ENCODE measurements at regions of chr11 and their contacts with region 1.

Region 1: DNA sequence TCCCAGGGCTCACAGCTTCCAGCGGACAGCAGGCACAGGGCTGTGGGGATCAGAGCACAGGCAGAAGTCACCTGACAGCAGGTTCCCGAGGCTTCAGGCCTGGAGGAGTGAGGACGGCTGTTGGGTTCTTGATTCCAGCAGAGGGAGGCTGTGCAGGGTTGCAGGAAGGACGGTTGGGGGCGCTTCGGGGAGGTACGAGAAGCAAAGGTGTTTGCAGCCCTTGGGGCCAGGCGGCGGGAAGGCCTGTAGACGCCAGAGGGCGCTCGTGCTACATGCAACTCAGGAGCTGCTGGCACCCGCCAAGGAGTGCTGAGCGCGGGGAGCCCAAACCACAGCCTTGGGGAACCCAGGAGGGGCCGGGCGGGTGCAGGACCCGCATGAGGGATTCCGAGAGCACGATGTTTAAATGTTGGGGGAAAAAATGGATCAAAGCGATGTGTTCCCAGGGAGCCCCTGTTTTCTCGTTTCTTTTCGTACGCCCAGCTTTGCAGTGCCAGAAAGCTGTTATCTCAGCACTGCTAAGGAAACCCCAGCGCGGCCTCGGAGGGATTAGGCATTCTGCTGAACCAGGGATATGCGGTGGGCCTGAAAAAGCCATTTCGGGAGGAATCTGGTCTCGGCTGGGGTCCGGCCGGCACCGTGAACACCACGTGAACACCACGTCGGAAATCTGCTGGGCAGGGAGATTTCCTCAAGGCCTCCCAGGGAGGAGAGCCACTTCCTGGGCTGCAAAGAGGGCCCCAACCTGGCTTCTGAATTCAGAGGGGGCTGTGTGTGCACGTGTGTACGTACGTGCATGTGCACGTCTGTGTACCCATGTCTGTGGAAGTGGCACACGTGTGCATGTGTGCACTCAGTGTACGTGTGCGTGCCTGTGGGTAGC is 88.1 kb downstream of the KCNQ1 start:
- DNase-seq: peak; percentile 95
- H3K4me3 ChIP-seq: peak overlapping the region in 3 of 4 donors; percentile 13 to 38 (median 32)
- H3K27ac ChIP-seq: peak overlapping the region in 2 of 4 donors; percentile 2 to 64
- H3K4me1 ChIP-seq: peaks cover 0 to 21% (median 17%) of the 10 kb centered on the region in 4 donors
- H3K27me3 ChIP-seq: peaks cover 0 to 3% (median 0%) of the 10 kb centered on the region in 3 donors
- CTCF ChIP-seq: peak; percentile 99 to 100 (median 99)
- EP300 ChIP-seq: no peak
- POLR2A ChIP-seq: no peak

Region 2: DNA sequence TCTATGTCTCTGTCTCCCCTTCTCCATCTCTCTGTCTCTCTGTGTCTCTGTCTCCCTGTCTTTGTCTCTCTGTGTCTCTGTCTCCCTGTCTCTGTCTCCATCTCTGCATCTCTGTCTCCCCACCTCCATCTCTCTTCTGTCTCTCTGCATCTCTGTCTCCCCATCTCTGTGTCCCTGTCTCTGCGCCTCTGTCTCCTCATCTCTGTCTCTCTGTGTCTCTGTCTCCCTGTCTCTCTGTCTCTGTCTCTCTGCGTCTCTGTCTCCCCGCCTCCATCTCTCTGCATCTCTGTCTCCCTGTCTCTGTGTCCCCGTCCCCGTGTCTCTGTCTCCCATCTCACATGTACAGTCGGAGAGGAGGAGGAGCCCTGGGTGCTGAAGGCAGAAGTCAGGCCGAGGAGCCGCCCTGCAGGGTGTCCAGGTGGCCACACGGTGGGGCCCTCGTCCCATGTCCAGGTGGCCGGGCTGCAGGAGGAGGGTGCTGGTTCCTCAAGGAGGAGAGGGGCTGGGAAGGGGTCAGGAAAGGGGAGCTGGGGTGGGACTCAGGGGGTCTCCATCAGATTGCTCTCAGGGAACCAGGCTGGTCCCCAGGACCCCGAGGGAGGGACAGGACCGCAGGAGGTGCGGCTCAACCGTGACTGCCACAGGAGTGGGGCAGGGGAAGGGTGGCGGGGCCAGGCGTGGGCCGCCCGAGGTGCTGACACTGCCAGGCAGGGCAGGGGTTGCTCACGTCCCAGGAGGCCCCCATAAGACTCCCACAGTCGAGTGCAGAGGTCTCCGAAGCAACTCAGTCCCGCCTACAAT is 335.8 kb before region 1 on chr11:
- intact Hi-C with region 1: loop called (anchors 5 kb)
- DNase-seq: peak; percentile 86
- H3K4me3 ChIP-seq: no peak overlapping the region
- H3K27ac ChIP-seq: no peak overlapping the region
- H3K4me1 ChIP-seq: no peaks in the 10 kb centered on the region
- H3K27me3 ChIP-seq: peaks cover 0 to 25% (median 0%) of the 10 kb centered on the region in 3 donors
- CTCF ChIP-seq: peak; percentile 88 to 94 (median 89)
- EP300 ChIP-seq: no peak
- POLR2A ChIP-seq: no peak

Region 3: DNA sequence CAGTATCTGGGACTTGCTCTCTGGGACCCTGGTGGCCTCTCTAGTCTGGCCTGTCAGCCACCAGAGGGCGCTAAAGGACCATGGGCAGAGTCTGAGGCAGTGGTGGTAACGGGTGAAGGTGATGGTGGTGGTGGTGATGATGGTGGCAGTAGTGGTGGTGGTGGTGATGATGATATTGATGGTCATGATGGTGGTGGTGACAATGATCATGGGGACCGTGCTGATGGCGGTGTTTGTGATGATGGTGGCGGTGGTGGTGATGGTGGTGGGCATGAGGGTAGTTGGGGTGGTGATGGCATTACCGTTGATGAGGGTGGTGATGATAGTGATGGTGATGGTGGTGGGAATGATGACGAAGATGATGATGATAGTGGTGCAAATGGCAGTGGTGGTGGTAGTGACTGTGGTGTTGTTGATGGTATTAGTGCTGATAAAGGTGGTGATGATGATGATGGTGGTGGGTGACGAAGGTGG is 104.6 kb before region 1 on chr11:
- intact Hi-C with region 1: loop called (anchors 2 kb)
- DNase-seq: no peak
- H3K4me3 ChIP-seq: no peak overlapping the region
- H3K27ac ChIP-seq: no peak overlapping the region
- H3K4me1 ChIP-seq: no peaks in the 10 kb centered on the region
- H3K27me3 ChIP-seq: no peaks in the 10 kb centered on the region
- CTCF ChIP-seq: peak; percentile 19 to 82 (median 67)
- EP300 ChIP-seq: no peak
- POLR2A ChIP-seq: no peak

Region 4: GRCh38 chr11:2498750-2499149 is 34.2 kb before region 1 on chr11:
- intact Hi-C with region 1: no loop called
- DNase-seq: no peak
- H3K4me3 ChIP-seq: no peak overlapping the region
- H3K27ac ChIP-seq: no peak overlapping the region
- H3K4me1 ChIP-seq: no peaks in the 10 kb centered on the region
- H3K27me3 ChIP-seq: peaks cover 0 to 16% (median 11%) of the 10 kb centered on the region in 3 donors
- CTCF ChIP-seq: no peak
- EP300 ChIP-seq: no peak
- POLR2A ChIP-seq: no peak

Region 5: DNA sequence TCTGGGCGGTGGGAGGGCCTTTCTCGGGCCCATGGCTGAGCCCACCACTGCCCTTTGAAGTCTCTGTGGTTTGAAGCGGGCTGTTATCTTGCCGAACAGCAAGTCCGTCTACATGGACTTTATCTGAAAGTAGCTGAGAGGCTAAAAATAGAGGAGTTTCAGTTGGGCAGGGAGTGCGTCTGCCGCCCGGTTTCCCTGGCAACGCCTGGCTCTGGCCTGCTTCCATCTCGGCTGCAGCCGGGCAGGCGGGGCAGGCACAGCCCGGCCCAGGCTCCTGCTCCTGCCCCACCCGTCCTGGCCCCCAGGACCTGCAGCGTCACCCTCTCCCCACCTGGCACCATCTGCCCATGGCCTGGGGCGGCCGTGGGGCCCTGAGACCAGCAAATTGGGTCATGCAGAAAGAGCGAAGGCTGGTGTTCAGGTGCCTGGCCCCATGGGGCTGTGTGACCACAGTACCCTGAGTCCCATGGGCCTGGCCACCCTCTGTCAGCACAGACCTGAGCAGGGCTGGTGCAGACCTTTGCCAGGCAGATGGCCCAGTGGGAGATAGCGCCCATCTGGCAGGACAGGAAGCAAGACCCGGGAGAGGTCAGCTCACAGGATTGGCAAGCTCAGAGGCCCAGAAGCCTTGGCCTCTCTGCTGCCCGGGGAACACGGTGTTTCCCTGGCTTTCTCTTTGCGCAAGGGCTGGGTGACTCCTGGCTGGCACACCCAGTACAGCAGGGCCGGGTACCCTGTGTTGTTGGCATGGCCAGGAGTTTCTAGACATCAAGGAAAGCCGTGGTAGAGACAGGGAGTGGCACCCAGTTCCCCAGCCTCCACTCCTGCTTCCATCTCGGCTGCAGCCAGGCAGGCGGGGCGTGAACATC is 245.9 kb after region 1 on chr11:
- intact Hi-C with region 1: loop called (anchors 1 kb)
- DNase-seq: peak; percentile 93
- H3K4me3 ChIP-seq: peak overlapping the region in 3 of 4 donors; percentile 9 to 24 (median 12)
- H3K27ac ChIP-seq: peak overlapping the region; percentile 79 to 90 (median 84)
- H3K4me1 ChIP-seq: peaks cover 0 to 32% (median 31%) of the 10 kb centered on the region in 4 donors
- H3K27me3 ChIP-seq: no peaks in the 10 kb centered on the region
- CTCF ChIP-seq: peak in 3 of 4 experiments; percentile 30 to 53 (median 45)
- EP300 ChIP-seq: peak in 1 of 4 donors; percentile 71
- POLR2A ChIP-seq: no peak

Region 6: GRCh38 chr11:2860636-2861035 is 327.7 kb after region 1 on chr11:
- intact Hi-C with region 1: no loop called
- DNase-seq: no peak
- H3K4me3 ChIP-seq: no peak overlapping the region
- H3K27ac ChIP-seq: no peak overlapping the region
- H3K4me1 ChIP-seq: peaks cover 0 to 16% (median 9%) of the 10 kb centered on the region in 4 donors
- H3K27me3 ChIP-seq: peaks cover 12 to 37% (median 14%) of the 10 kb centered on the region in 3 donors
- CTCF ChIP-seq: no peak
- EP300 ChIP-seq: no peak
- POLR2A ChIP-seq: no peak

Region 7: GRCh38 chr11:2892215-2893020 is 359.5 kb after region 1 on chr11:
- intact Hi-C with region 1: loop called (anchors 1 kb)
- DNase-seq: peak; percentile 83
- H3K4me3 ChIP-seq: peak overlapping the region; percentile 21 to 46 (median 30)
- H3K27ac ChIP-seq: peak overlapping the region; percentile 37 to 57 (median 46)
- H3K4me1 ChIP-seq: peaks cover 0 to 37% (median 36%) of the 10 kb centered on the region in 4 donors
- H3K27me3 ChIP-seq: no peaks in the 10 kb centered on the region
- CTCF ChIP-seq: peak; percentile 92 to 97 (median 94)
- EP300 ChIP-seq: no peak
- POLR2A ChIP-seq: no peak

Measured in sigmoid colon (tissue), 7 donors.